Activated CD4-positive, alpha-beta T cell treated with anti-CD3 and anti-CD28 coated beads, Interleukin-2, amount 10 ng/mL, durations not matched to agents 7 days and 5 days (primary cell): ENCODE measurements at regions of chr1 and their contacts with region 1.

Region 1: DNA sequence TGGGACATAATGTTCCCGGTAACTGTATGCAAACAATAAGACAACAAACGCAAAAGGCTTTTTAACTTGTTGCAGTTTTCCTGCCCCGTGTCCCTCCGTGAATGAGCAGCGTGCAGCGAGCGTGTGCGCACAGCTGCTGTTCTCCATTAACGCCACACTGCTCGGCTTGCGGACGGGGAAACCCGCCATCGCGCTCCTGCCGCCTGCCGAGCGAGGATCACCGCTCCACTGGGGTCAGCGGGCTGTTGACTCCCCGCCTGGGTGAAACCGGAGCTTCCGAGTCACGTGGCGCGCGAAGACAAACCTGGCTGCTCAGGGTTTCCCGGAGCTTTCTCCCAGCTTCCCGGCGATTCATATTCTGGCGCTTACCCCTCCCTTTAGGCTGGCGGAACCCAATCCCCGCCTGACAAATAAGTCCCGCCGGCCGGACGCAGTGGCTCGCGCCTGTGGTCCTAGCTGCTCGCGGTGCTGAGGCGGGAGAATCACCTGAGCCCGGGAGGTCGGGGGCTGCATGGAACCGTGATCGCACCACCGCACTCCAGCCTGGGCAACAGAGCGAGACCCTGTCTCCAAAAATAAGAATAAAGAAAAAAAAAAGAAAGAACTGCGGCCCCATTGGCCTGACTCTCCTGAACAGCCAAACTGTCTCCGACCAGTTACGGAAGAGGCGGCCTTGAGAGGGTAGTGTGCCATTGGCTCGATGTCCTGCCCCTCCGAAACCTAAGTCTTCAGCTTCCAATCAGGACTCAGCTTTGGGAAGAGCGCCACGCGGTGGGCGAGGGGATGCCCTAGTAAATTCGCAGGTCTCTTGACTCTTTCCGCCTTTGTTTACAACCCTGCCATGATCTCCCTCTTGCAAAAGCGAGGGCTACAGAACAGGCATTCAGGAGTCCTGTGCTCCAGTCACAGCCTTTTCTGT is at the start of gene CREB3L4:
- DNase-seq: peak; percentile 90
- H3K4me3 Mint-ChIP-seq: peak within 1 kb of the TSS; percentile 88
- H3K27ac Mint-ChIP-seq: peak within 1 kb of the TSS; percentile 95
- H3K4me1 Mint-ChIP-seq: peaks cover 62% of the 10 kb centered on the region
- H3K27me3 Mint-ChIP-seq: no peaks in the 10 kb centered on the region
- total RNA-seq, gene CREB3L4: 6.9 to 7.9 TPM

Region 2: DNA sequence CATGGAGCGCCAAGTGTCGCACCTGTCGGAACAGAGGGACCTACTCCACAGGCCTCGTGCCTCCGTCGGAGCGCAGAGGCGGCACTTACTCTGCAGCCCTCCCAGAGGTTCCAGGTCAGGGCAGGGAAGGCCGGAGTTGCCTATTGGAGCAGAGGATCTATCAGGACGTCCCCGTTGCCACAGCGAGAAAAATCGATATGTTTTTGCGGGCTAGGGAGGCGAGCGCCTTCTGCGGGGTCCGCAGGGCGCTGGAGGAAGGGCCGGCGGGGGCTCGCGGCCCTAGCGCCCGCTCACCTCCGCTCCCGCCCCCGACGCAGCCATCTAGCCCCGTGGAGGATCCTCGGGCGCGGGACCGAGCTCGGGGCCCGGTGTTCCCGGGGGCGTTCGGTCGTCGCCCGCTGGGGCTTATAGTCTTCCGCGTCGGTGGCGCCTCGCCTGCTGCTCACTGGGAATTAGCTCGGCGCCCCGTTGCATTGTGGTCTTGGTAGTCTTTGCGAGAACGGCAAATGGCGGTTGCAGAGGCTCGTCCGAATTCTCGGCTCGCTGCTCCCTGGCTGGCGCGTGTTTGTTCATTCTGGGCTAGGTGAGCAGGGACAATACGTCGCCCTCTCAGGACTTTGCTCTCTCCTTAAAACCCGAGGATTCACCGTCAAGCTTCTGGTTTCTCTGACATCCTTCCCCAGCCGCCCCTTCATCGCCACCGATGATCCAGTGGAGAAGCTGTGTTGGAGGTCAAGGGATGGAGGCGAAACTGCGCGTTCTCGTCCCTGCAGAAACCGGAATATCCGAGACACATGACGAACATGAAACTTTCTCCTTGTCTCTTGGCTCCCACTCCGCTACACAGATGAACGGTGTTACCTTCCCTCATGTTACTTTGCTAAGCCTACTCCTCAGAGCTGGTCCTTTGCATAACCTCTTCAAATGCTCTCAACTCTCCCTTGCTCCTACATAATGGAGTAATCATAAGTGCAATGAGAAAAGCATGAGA is 10.2 kb after region 1 on chr1 and contains the start of gene JTB:
- CTCF ChIA-PET with region 1: interaction called, 14 read pairs
- POLR2A ChIA-PET with region 1: interaction called, 9 read pairs
- DNase-seq: peak; percentile 90
- H3K4me3 Mint-ChIP-seq: peak within 1 kb of the TSS; percentile 97
- H3K27ac Mint-ChIP-seq: peak within 1 kb of the TSS; percentile 92
- H3K4me1 Mint-ChIP-seq: peaks cover 47% of the 10 kb centered on the region
- H3K27me3 Mint-ChIP-seq: no peaks in the 10 kb centered on the region
- total RNA-seq, gene JTB: 111 to 124 TPM

Region 3: DNA sequence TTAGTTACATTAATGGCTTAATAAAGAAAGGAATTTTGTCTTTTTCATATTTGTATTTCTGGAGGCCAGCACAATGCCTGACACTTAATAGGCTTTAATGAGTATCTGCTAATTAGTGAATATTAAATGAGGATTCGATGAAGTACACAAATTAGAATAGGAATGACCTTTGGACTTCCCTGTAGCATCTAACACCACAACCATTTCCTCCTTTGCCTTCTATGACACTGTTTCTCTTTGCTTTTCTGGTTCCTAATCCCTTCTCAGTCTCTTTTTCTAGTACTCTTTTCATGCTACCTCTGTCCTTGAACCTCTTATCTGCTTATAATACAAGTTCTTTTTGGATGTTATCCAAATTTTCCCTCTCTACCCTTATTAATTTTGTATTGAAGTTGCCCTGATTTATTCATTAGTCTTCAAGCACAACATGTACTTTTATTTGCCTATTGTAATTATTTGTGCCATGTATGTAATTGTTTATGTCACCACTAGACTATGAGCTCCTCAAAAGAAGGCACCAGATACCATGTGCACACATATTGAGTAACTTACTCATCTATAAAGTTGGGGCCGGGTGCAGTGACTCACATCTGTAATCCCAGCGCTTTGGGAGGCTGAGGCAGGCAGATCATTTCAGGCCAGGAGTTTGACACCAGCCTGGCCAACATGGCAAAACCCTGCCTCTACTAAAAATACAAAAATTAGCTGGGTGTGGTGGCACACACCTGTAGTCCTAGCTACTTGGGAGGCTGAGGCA is 47.0 kb after region 1 on chr1:
- CTCF ChIA-PET with region 1: no interaction called
- POLR2A ChIA-PET with region 1: no interaction called
- DNase-seq: no peak
- H3K4me3 Mint-ChIP-seq: no peak overlapping the region
- H3K27ac Mint-ChIP-seq: no peak overlapping the region
- H3K4me1 Mint-ChIP-seq: no peaks in the 10 kb centered on the region
- H3K27me3 Mint-ChIP-seq: no peaks in the 10 kb centered on the region

Region 4: GRCh38 chr1:154237435-154237834 is 270.1 kb after region 1 on chr1:
- CTCF ChIA-PET with region 1: no interaction called
- POLR2A ChIA-PET with region 1: interaction called, 13 read pairs
- DNase-seq: no peak
- H3K4me3 Mint-ChIP-seq: no peak overlapping the region
- H3K27ac Mint-ChIP-seq: no peak overlapping the region
- H3K4me1 Mint-ChIP-seq: peaks cover 27% of the 10 kb centered on the region
- H3K27me3 Mint-ChIP-seq: no peaks in the 10 kb centered on the region